ENCODE measurements at regions of chr12 and their contacts with region 1.

Region 1: DNA sequence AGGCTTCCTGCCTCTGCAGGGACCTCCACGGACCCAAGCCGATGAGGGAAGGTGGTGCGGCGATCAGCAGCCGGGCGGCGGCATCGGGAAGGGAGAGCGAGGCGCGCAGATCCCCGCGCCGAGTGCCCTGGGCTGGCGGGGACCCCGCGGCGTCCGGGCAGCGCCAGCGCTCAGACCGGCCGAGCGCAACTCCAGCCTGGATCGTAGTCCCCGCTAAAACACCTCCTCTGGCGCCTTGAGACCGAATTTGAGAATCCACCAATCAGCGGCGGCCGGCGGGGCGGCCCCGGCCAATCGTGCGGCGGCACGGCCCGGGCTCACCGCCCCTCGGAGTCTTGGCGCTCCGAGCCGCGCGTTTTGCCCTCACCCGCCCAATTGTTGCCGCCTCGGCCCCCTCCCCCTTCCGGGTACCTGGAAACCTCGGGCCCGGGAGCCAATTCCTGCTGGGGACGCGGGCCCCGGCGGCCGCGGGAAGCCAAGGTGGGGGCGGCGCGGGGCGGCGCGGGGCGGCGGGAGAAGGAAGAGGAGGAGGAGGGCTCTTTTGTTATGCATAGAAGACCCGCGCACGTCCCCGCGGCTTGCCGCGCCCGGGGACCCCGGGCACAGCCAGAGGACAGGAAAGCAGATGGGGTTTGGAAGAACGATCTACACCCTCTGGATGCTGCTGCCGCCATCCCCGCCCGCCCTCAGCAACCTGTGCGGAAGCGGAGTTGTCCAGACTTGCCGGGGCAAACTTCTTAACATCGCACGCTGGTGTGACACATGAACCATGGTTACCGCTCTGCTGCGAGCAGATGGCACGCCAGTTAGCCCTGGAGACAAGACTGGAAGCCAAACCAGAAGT is at the start of gene E2F7:
- DNase-seq: peak; percentile 35 to 91
- H3K4me3 ChIP-seq: peak within 1 kb of the TSS; percentile 65 to 71
- H3K27ac ChIP-seq: peak within 1 kb of the TSS; percentile 6 to 16
- H3K4me1 ChIP-seq: peaks cover 0 to 6% of the 10 kb centered on the region in 2 donors
- H3K27me3 ChIP-seq: no peaks in the 10 kb centered on the region
- CTCF ChIP-seq: no peak
- total RNA-seq, gene E2F7: not detected

Region 2: GRCh38 chr12:77324763-77325468 is 259.3 kb after region 1 on chr12:
- intact Hi-C with region 1: loop called (anchors 10 kb)
- DNase-seq: peak in 1 of 2 donors; percentile 79
- H3K4me3 ChIP-seq: peak overlapping the region; percentile 57 to 70
- H3K27ac ChIP-seq: no peak overlapping the region
- H3K4me1 ChIP-seq: no peaks in the 10 kb centered on the region
- H3K27me3 ChIP-seq: no peaks in the 10 kb centered on the region
- CTCF ChIP-seq: peak; percentile 10 to 42 (median 24)